BJ (cell line): ENCODE measurements at regions of chr20 and their contacts with region 1.

Region 1: DNA sequence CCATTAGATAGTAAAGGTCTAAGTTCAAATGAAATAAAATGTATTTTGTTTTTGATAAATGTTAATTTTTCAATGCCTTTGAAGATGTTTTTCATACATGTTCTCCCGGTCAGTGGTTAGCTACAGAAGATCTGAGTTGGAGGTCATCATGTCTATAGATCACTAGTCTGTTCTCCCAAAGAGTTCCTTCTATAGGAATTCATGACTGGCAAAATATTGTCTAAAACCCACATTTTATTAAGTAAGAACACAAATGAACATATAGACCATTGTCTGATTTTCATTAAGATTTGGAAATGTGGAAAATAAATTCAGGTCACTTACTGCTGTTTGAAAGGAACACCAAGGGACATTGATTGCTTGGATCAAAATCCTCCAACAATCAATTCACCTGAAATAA is 23.6 kb downstream of the HAO1 start:
- DNase-seq: no peak
- H3K4me3 ChIP-seq: no peak overlapping the region
- H3K27me3 ChIP-seq: no peaks in the 10 kb centered on the region
- CTCF ChIP-seq: no peak

Region 2: GRCh38 chr20:6919792-6920468 is 996.7 kb before region 1 on chr20:
- CTCF ChIA-PET with region 1: no interaction called
- POLR2A ChIA-PET with region 1: interaction called, 10 read pairs
- DNase-seq: no peak
- H3K4me3 ChIP-seq: no peak overlapping the region
- H3K27me3 ChIP-seq: no peaks in the 10 kb centered on the region
- CTCF ChIP-seq: no peak